Mammary epithelial cell (primary cell): ENCODE measurements at regions of chr19 and their contacts with region 1.

Region 1: GRCh38 chr19:48784540-48784939 is 26.3 kb downstream of the BCAT2 start:
- DNase-seq: no peak
- H3K4me3 ChIP-seq: no peak overlapping the region
- H3K27ac ChIP-seq: no peak overlapping the region
- H3K4me1 ChIP-seq: peaks cover 8% of the 10 kb centered on the region
- H3K27me3 ChIP-seq: no peaks in the 10 kb centered on the region
- CTCF ChIP-seq: no peak

Region 2: GRCh38 chr19:48835734-48836088 is 51.2 kb after region 1 on chr19:
- CTCF ChIA-PET with region 1: no interaction called
- dilution Hi-C with region 1: no loop called
- in situ Hi-C with region 1: no loop called
- intact Hi-C with region 1: loop called (anchors 1 kb)
- DNase-seq: peak; percentile 76
- H3K4me3 ChIP-seq: peak overlapping the region in 1 of 3 experiments; percentile 24
- H3K27ac ChIP-seq: no peak overlapping the region
- H3K4me1 ChIP-seq: peaks cover 5% of the 10 kb centered on the region
- H3K27me3 ChIP-seq: no peaks in the 10 kb centered on the region
- CTCF ChIP-seq: peak; percentile 92 to 95

Region 3: GRCh38 chr19:48993175-48994034 is 208.9 kb after region 1 on chr19 and contains the starts of genes GYS1 and RUVBL2:
- CTCF ChIA-PET with region 1: no interaction called
- dilution Hi-C with region 1: no loop called
- in situ Hi-C with region 1: no loop called
- intact Hi-C with region 1: loop called (anchors 2 kb)
- DNase-seq: peak; percentile 100
- H3K4me3 ChIP-seq: peak within 1 kb of the TSS; percentile 81 to 89 (median 86)
- H3K27ac ChIP-seq: peak within 1 kb of the TSS; percentile 86
- H3K4me1 ChIP-seq: peaks cover 28% of the 10 kb centered on the region
- H3K27me3 ChIP-seq: no peaks in the 10 kb centered on the region
- CTCF ChIP-seq: peak; percentile 83 to 92
- total RNA-seq, gene GYS1: 40.0 to 79.8 TPM
- total RNA-seq, gene RUVBL2: 108 to 148 TPM

Region 4: GRCh38 chr19:49073514-49074378 is 289.2 kb after region 1 on chr19:
- CTCF ChIA-PET with region 1: no interaction called
- dilution Hi-C with region 1: no loop called
- in situ Hi-C with region 1: no loop called
- intact Hi-C with region 1: loop called (anchors 1 kb)
- DNase-seq: peak; percentile 57
- H3K4me3 ChIP-seq: peak overlapping the region in 1 of 3 experiments; percentile 14
- H3K27ac ChIP-seq: no peak overlapping the region
- H3K4me1 ChIP-seq: peaks cover 13% of the 10 kb centered on the region
- H3K27me3 ChIP-seq: peaks cover 18% of the 10 kb centered on the region
- CTCF ChIP-seq: peak; percentile 26 to 49